ENCODE measurements at regions of chr11 and their contacts with region 1.

Region 1: GRCh38 chr11:10653926-10654810 is 39.4 kb downstream of the IRAG1 start:
- DNase-seq: peak; percentile 14
- H3K4me3 Mint-ChIP-seq: no peak overlapping the region
- H3K27ac Mint-ChIP-seq: no peak overlapping the region
- H3K4me1 Mint-ChIP-seq: peaks cover 24% of the 10 kb centered on the region
- H3K27me3 Mint-ChIP-seq: no peaks in the 10 kb centered on the region

Region 2: DNA sequence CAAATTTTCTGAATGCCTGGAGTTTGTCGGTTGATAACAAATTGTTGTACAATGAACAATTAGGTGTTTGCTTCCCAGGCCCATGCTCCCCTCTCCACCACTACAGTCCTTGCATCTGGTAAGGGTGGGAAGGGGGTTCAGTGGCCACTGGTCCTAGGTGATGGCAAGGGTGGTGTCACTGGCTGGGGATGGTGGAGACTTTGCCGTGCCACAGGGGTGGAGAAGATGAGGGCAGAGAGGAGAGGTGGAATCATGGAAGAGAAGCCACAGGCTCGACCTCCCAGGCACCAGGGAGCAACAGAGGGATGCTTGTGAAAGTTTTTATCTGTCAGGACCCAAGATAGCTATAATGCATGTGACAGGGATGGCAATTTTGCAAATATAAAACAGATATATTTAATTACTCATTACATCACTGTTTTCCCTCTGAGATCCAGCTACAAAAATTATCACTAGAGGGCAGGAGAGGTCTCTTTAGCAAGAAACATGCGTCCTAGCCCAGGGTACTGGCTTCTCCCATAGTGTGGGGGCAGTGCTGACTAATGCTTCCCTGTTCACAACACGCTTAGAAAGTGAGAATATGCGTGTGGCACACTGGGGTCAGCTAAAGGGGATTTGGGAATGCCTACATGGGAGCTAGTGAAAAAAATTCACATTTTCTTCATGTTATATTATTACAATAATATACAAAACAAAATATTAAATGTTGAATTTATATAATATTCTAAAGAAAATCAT is 248.1 kb before region 1 on chr11:
- intact Hi-C with region 1: loop called (anchors 1 kb)
- DNase-seq: no peak
- H3K4me3 Mint-ChIP-seq: no peak overlapping the region
- H3K27ac Mint-ChIP-seq: no peak overlapping the region
- H3K4me1 Mint-ChIP-seq: peaks cover 13% of the 10 kb centered on the region
- H3K27me3 Mint-ChIP-seq: no peaks in the 10 kb centered on the region

Region 3: GRCh38 chr11:10514210-10514609 is 140.0 kb before region 1 on chr11:
- intact Hi-C with region 1: loop called (anchors 5 kb)
- DNase-seq: no peak
- H3K4me3 Mint-ChIP-seq: no peak overlapping the region
- H3K27ac Mint-ChIP-seq: no peak overlapping the region
- H3K4me1 Mint-ChIP-seq: peaks cover 2% of the 10 kb centered on the region
- H3K27me3 Mint-ChIP-seq: no peaks in the 10 kb centered on the region

Region 4: GRCh38 chr11:10540923-10541560 is 113.1 kb before region 1 on chr11 and contains the start of gene RNF141:
- intact Hi-C with region 1: loop called (anchors 10 kb)
- DNase-seq: peak; percentile 92
- H3K4me3 Mint-ChIP-seq: peak within 1 kb of the TSS; percentile 89
- H3K27ac Mint-ChIP-seq: peak within 1 kb of the TSS; percentile 60
- H3K4me1 Mint-ChIP-seq: peaks cover 17% of the 10 kb centered on the region
- H3K27me3 Mint-ChIP-seq: peaks cover 1% of the 10 kb centered on the region
- total RNA-seq, gene RNF141: 13.2 and 15.6 TPM in 2 replicates

Region 5: GRCh38 chr11:10727146-10727851 is 73.1 kb after region 1 on chr11:
- intact Hi-C with region 1: loop called (anchors 1 kb)
- DNase-seq: no peak
- H3K4me3 Mint-ChIP-seq: no peak overlapping the region
- H3K27ac Mint-ChIP-seq: no peak overlapping the region
- H3K4me1 Mint-ChIP-seq: peaks cover 21% of the 10 kb centered on the region
- H3K27me3 Mint-ChIP-seq: peaks cover 29% of the 10 kb centered on the region

Region 6: DNA sequence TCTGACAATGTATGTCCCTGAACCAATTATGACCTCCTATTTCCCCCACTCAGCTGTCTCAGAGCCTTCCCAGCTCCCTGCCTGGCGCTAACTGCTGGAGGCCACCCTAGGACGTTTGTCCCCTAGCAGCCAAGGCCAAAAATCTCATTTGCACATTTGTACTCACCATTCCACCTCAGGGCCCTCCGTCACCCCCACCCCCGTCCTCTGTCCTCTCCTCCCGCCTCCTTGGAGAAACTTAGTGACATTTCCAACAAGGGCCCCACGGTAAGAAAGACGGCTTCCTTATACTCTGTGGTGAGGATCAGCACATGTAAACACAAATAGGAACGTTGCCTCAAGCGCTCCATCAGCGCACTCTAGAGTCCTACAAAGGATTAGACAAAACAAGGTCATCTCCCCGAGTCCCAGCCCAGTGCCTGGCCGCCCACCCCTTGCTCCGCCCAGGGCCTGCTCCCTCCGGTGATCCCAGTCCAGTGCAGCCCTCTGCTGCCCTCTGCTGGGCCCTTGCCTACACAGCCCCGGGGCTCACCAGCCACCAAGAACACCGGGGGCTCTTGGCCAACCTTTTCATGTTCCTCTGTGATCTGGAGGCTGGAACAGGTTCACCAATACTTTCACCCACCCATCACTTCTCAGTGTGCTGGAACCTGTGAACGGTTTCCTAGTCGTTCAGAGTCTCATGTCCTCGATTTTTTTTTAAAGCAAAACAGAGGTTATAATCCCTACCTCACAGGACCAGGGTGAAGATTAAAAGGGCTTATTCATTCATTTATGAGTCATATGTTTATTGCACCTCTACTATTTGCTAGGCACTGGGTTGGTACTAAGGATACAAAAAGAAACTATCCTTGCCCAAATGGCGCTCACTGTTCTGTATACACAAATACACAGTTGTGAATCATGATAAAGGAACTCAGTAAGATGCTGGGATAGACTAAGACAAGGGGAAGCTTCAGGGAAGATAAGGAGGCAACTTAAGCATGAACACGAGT is 81.6 kb after region 1 on chr11:
- intact Hi-C with region 1: loop called (anchors 2 kb)
- DNase-seq: peak; percentile 76
- H3K4me3 Mint-ChIP-seq: no peak overlapping the region
- H3K27ac Mint-ChIP-seq: no peak overlapping the region
- H3K4me1 Mint-ChIP-seq: peaks cover 10% of the 10 kb centered on the region
- H3K27me3 Mint-ChIP-seq: peaks cover 13% of the 10 kb centered on the region

Measured in activated T-helper 2 cell treated with anti-CD3 and anti-CD28 coated beads, Interferon-gamma antibody, Interleukin-2, Interleukin-4, amounts not matched to agents 10 μg/mL and 5 μg/mL and 100 μg/mL, durations not matched to agents 14 hours and 24 hours and 36 hours (primary cell).